ENCODE measurements at regions of chr9 and their contacts with region 1.

Region 1: GRCh38 chr9:90086101-90086511 is 481.3 kb downstream of the GADD45G start:
- DNase-seq: no peak
- ATAC-seq: peak; percentile 50

Region 2: GRCh38 chr9:91138760-91139159 is 1052.7 kb after region 1 on chr9:
- intact Hi-C with region 1: loop called (anchors 5 kb)
- DNase-seq: no peak
- ATAC-seq: no peak